ENCODE measurements at regions of chr19 and their contacts with region 1.

Region 1: DNA sequence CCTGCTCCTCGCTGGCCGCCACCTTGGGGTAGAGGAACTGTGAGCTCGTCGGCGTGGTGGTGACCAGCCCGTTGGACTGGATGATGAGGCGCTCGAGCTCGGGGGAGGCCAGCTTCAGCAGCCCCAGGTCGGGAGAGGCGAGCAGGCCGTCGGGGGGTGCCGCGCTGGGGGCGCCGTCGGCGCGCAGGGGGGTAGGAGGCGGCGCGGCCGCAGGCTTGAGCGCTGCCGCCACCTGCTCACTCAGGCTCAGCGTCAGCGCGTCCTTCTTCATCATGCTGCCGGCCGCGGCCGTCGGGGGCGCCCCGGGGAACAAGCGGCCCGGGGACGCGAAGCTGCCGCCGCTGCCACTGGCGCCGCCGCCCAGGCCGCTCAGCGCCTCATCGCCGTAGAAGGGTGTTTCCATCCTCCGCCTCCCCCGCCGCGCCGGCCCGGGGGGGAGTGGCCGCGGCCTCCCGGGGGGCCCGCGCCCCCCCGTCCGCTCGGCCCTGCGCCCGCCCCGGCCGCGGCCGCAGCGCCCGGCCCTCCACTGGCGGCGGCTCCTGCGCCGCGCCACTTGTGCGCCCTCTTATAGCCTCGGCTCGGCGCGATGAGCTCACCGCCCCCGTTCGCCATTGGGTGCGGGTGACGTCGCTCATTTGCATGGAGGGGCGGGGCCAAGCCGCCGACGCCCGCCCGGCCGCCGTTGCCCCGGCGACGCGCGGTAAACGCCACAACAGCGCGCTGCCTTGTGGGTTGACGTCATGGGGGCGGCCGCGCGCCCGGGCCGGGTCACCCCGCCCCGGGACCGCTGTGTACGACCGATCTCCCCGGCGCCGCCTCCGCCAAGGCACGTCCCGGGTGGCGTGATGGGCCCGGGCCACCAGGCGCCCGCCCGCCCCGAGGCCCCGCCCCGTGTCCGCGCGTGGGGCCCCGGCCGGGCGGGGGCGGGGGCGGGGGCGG is at the start of gene JUND:
- DNase-seq: peak; percentile 98 to 99 (median 99)
- ATAC-seq: peak; percentile 77
- H3K4me3 ChIP-seq: peak within 1 kb of the TSS; percentile 91
- H3K4me3 Mint-ChIP-seq: peak within 1 kb of the TSS; percentile 91 to 98 (median 94)
- H3K27ac ChIP-seq: peak within 1 kb of the TSS; percentile 100
- H3K27ac Mint-ChIP-seq: peak within 1 kb of the TSS; percentile 96 to 99 (median 98)
- H3K4me1 ChIP-seq: peaks cover 26 to 45% of the 10 kb centered on the region in 2 donors
- H3K4me1 Mint-ChIP-seq: peaks cover 29 to 56% (median 50%) of the 10 kb centered on the region in 7 donors
- H3K27me3 ChIP-seq: no peaks in the 10 kb centered on the region
- H3K27me3 Mint-ChIP-seq: peaks cover 0 to 9% (median 0%) of the 10 kb centered on the region in 5 donors
- total RNA-seq, gene JUND: 196 to 1,360 (median 279) TPM

Region 2: DNA sequence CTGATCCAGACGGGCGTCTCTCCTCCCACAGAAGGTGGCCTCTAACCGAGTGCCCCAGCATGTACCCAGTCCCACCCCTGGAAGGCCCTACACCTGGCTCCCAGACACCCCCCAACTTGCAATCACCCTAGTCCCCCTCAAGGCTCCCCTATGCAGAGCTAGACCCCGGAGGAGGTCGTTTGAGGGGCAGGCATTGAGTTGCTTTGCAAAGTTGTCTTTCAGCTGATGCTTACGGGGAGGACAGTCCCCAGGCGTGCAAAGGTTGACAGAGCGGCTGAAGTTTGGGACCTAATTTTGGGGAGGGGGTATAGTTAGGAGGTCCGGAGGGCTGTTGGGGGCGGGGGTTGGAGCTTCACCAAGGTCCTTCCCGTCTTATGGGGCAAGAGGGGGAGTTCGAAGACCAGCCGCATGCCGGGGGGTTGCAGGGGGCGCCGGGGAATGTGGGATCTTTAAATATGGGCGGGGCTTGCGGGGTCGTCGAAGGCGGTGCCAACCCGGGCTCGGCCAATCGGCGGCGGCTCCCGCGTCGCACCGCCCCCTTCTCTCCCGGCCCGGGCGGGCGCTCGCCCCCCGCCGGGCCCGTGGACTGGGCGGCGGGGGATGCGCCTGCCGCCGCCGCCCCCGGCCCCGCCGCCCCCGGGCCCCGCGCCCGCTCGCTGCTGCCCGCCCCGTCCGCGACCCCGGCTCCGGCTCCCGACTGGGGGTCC is 314.6 kb before region 1 on chr19 and contains the start of gene KCNN1:
- CTCF ChIA-PET with region 1: no interaction called
- POLR2A ChIA-PET with region 1: no interaction called
- intact Hi-C with region 1: no loop called
- DNase-seq: no peak
- ATAC-seq: no peak
- H3K4me3 ChIP-seq: no peak within 1 kb of the TSS
- H3K4me3 Mint-ChIP-seq: peak within 1 kb of the TSS in 9 of 10 donors; percentile 34 to 81 (median 67)
- H3K27ac ChIP-seq: no peak within 1 kb of the TSS
- H3K27ac Mint-ChIP-seq: peak within 1 kb of the TSS in 1 of 9 donors; percentile 43
- H3K4me1 ChIP-seq: peaks cover 0 to 5% of the 10 kb centered on the region in 2 donors
- H3K4me1 Mint-ChIP-seq: peaks cover 0 to 11% (median 8%) of the 10 kb centered on the region in 7 donors
- H3K27me3 ChIP-seq: peaks cover 0 to 13% of the 10 kb centered on the region in 2 donors
- H3K27me3 Mint-ChIP-seq: peaks cover 32 to 48% (median 38%) of the 10 kb centered on the region in 5 donors
- total RNA-seq, gene KCNN1: 0.05 TPM in 1 of 5 experiments, not detected in the others

Region 3: DNA sequence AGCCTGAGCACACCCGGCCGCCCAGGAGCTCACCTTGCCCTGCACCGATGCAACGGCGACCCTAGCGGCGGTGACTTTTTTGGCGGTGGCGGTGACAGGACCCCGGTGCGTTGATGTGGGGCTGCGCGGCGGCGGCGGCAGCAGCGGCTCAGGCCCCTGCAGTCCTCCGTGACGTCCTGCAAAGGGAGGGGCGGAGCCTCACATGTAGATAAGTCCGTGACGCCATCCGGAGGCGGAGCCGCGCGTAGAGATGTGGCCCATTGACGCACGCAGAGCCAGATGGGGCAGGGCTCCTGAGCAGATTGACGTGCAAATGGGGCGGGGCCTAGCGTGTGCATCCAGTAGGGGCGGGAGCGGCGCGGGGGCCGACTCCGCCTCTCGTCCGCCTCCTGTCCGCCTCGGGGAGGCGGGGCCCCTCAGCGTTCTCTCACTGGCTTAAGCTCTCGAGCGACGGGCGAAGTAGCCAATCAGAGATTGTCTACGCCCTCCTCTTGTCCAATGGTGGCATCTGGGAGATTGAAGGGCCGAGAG is 77.4 kb before region 1 on chr19 and contains the start of gene RAB3A:
- CTCF ChIA-PET with region 1: interaction called, 3 read pairs
- POLR2A ChIA-PET with region 1: interaction called, 37 read pairs
- intact Hi-C with region 1: loop called in 1 of 2 experiments (anchors 1 kb)
- DNase-seq: peak; percentile 95 to 100 (median 99)
- ATAC-seq: peak; percentile 95
- H3K4me3 ChIP-seq: peak within 1 kb of the TSS; percentile 90
- H3K4me3 Mint-ChIP-seq: peak within 1 kb of the TSS; percentile 83 to 98 (median 96)
- H3K27ac ChIP-seq: peak within 1 kb of the TSS; percentile 85
- H3K27ac Mint-ChIP-seq: peak within 1 kb of the TSS; percentile 87 to 99 (median 97)
- H3K4me1 ChIP-seq: peaks cover 15 to 16% of the 10 kb centered on the region in 2 donors
- H3K4me1 Mint-ChIP-seq: peaks cover 11 to 26% (median 22%) of the 10 kb centered on the region in 7 donors
- H3K27me3 ChIP-seq: no peaks in the 10 kb centered on the region
- H3K27me3 Mint-ChIP-seq: peaks cover 0 to 8% (median 0%) of the 10 kb centered on the region in 5 donors
- total RNA-seq, gene RAB3A: 5.7 to 16.7 (median 8.8) TPM

Region 4: DNA sequence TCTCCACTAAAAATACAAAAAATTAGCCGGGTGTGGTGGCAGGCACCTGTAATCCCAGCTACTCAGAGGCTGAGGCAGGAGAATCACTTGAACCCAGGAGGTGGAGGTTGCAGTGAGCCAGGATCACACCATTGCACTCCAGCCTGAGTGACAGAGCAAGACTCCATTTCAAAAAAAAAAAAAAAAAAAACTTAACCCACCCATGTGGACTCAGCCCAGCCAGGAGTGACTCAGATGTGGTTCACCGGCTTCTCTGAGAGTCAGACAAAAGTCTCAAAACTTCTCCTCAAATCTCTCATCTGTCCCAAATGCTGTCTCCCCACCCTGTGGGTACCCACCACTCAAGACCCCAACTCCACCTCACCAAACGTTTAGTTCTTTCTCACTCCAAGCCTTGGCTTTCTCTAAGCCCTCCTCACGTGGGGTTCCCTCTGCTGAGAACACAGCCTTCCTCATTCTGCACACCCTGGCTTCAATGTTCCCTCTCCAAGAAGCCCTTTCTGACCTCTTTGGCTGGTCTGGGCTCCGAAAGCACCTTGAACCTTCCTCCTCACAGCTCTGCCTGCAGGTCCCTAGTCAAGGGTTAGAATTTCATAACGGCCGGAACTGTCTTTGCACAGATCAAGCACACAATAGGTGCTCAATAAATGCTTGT is 66.4 kb before region 1 on chr19:
- CTCF ChIA-PET with region 1: no interaction called
- POLR2A ChIA-PET with region 1: no interaction called
- intact Hi-C with region 1: no loop called
- DNase-seq: no peak
- ATAC-seq: no peak
- H3K4me3 ChIP-seq: no peak overlapping the region
- H3K4me3 Mint-ChIP-seq: no peak overlapping the region
- H3K27ac ChIP-seq: no peak overlapping the region
- H3K27ac Mint-ChIP-seq: no peak overlapping the region
- H3K4me1 ChIP-seq: no peaks in the 10 kb centered on the region
- H3K4me1 Mint-ChIP-seq: no peaks in the 10 kb centered on the region
- H3K27me3 ChIP-seq: no peaks in the 10 kb centered on the region
- H3K27me3 Mint-ChIP-seq: peaks cover 0 to 12% (median 8%) of the 10 kb centered on the region in 5 donors

Region 5: DNA sequence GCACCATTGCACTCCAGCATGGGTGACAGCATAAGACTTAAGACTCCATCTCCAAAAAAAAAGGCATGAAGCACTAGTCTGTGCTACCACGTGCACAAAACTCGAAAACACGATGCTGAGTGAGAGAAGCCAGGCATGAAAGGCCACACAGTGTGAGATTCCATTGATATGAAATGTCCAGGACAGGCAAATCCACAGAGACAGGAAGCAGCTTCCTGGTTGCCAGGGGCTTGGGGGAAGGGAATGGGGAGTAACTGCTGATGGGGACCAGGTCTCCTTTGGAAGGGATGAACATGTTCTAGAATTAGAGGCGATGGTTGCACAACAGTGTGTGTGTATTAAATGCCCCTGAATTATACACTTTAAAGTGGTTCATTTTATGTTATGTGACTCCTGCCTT is 16.0 kb after region 1 on chr19:
- CTCF ChIA-PET with region 1: interaction called, 73 read pairs
- POLR2A ChIA-PET with region 1: interaction called, 351 read pairs
- intact Hi-C with region 1: loop called in 1 of 2 experiments (anchors 2 kb)
- DNase-seq: no peak
- ATAC-seq: no peak
- H3K4me3 ChIP-seq: no peak overlapping the region
- H3K4me3 Mint-ChIP-seq: no peak overlapping the region
- H3K27ac ChIP-seq: no peak overlapping the region
- H3K27ac Mint-ChIP-seq: peak overlapping the region in 8 of 9 donors; percentile 4 to 74 (median 46)
- H3K4me1 ChIP-seq: peaks cover 20 to 26% of the 10 kb centered on the region in 2 donors
- H3K4me1 Mint-ChIP-seq: peaks cover 19 to 47% (median 27%) of the 10 kb centered on the region in 7 donors
- H3K27me3 ChIP-seq: no peaks in the 10 kb centered on the region
- H3K27me3 Mint-ChIP-seq: no peaks in the 10 kb centered on the region

Region 6: DNA sequence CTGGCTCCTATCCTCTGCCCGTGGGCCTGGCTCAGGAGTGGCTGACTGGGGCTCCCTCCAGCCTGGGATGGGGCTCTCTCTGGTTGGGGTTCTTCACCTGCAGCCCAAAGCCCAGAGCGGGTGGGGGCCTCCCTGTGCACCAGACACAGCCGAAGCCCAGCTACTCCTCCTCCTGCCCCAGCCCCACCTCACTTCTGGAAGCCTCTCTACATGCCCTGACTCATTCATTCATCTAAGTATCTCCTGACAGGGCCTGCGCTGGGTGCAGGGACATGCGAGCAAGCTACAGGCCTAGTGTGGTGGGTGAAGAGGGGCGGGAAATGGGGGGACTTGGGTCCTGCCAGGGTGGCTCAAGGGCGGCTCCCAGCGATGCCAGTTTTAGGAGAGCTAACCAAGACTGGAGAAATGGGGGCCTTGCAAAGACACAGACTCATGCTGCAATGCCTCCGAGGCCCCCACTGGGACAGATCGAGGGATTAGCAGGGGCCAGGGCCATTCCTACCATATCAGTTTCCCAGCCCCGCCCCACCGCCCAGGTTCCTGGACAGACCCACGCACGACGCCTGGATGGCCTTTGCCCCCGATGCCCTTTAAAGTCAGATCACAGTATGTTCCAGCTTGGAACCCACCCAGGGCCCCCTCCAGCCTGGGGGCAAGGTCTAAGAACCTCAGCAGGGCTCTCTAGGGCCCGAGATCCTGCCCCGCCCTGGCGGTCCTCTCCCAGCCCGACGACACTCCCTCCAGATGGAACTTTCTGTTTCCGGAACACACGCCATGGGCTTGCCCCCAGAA is 29.0 kb after region 1 on chr19:
- CTCF ChIA-PET with region 1: interaction called, 73 read pairs
- POLR2A ChIA-PET with region 1: interaction called, 757 read pairs
- intact Hi-C with region 1: no loop called
- DNase-seq: no peak
- ATAC-seq: no peak
- H3K4me3 ChIP-seq: no peak overlapping the region
- H3K4me3 Mint-ChIP-seq: no peak overlapping the region
- H3K27ac ChIP-seq: no peak overlapping the region
- H3K27ac Mint-ChIP-seq: peak overlapping the region in 3 of 9 donors; percentile 28 to 71 (median 46)
- H3K4me1 ChIP-seq: peaks cover 13 to 30% of the 10 kb centered on the region in 2 donors
- H3K4me1 Mint-ChIP-seq: peaks cover 12 to 42% (median 25%) of the 10 kb centered on the region in 7 donors
- H3K27me3 ChIP-seq: no peaks in the 10 kb centered on the region
- H3K27me3 Mint-ChIP-seq: no peaks in the 10 kb centered on the region

Region 7: DNA sequence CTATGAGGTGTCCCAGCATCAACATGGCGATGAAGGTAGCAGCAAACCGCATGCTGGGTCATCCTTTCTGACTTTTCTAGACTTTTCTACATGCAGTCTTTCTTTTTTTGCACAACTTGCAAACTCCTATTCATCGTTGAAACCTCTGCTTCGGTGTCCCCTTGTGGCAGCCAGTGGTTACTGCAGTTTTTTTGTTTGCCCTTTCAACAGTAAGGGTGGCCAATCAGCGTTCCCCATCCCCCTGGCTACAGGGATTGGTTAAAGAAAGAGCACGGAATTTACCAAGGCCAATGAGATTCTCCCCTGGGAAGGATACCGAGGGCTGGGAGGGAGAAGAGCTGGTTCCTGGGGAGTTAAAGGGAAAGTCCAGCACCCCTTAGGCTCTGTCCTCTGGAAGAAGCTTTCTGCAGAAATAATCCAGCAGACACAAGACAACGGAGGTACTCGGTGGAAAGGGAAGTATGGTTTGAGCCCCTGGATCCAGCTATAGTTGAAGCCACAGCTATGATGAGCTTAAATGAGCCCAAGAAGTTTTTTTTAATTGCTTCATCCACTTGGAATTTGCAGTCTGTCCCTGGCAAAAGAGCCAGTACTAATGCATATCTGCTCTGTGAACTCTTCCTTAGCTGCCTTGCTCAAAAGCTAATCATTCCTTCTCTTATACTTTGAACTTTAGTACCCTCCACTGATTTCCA is 47.1 kb after region 1 on chr19:
- CTCF ChIA-PET with region 1: interaction called, 266 read pairs
- POLR2A ChIA-PET with region 1: interaction called, 757 read pairs
- intact Hi-C with region 1: loop called (anchors 1 kb)
- DNase-seq: peak; percentile 55 to 92 (median 90)
- ATAC-seq: peak; percentile 99
- H3K4me3 ChIP-seq: peak overlapping the region; percentile 52
- H3K4me3 Mint-ChIP-seq: peak overlapping the region; percentile 62 to 87 (median 78)
- H3K27ac ChIP-seq: peak overlapping the region; percentile 45
- H3K27ac Mint-ChIP-seq: peak overlapping the region in 8 of 9 donors; percentile 38 to 75 (median 72)
- H3K4me1 ChIP-seq: peaks cover 12% of the 10 kb centered on the region in 2 donors
- H3K4me1 Mint-ChIP-seq: peaks cover 13 to 23% (median 20%) of the 10 kb centered on the region in 7 donors
- H3K27me3 ChIP-seq: no peaks in the 10 kb centered on the region
- H3K27me3 Mint-ChIP-seq: no peaks in the 10 kb centered on the region

Region 8: GRCh38 chr19:18388100-18388959 is 107.0 kb after region 1 on chr19:
- CTCF ChIA-PET with region 1: interaction called, 17 read pairs
- POLR2A ChIA-PET with region 1: interaction called, 8 read pairs
- intact Hi-C with region 1: no loop called
- DNase-seq: peak; percentile 38 to 86 (median 65)
- ATAC-seq: peak; percentile 90
- H3K4me3 ChIP-seq: peak overlapping the region; percentile 38
- H3K4me3 Mint-ChIP-seq: peak overlapping the region; percentile 62 to 83 (median 78)
- H3K27ac ChIP-seq: no peak overlapping the region
- H3K27ac Mint-ChIP-seq: peak overlapping the region in 1 of 9 donors; percentile 42
- H3K4me1 ChIP-seq: peaks cover 0 to 4% of the 10 kb centered on the region in 2 donors
- H3K4me1 Mint-ChIP-seq: peaks cover 0 to 12% (median 7%) of the 10 kb centered on the region in 7 donors
- H3K27me3 ChIP-seq: peaks cover 0 to 11% of the 10 kb centered on the region in 2 donors
- H3K27me3 Mint-ChIP-seq: peaks cover 19 to 73% (median 29%) of the 10 kb centered on the region in 5 donors

Region 9: GRCh38 chr19:18568367-18568766 is 287.0 kb after region 1 on chr19:
- CTCF ChIA-PET with region 1: no interaction called
- POLR2A ChIA-PET with region 1: no interaction called
- intact Hi-C with region 1: no loop called
- DNase-seq: no peak
- ATAC-seq: no peak
- H3K4me3 ChIP-seq: no peak overlapping the region
- H3K4me3 Mint-ChIP-seq: no peak overlapping the region
- H3K27ac ChIP-seq: no peak overlapping the region
- H3K27ac Mint-ChIP-seq: no peak overlapping the region
- H3K4me1 ChIP-seq: peaks cover 13 to 15% of the 10 kb centered on the region in 2 donors
- H3K4me1 Mint-ChIP-seq: peaks cover 14 to 28% (median 19%) of the 10 kb centered on the region in 7 donors
- H3K27me3 ChIP-seq: no peaks in the 10 kb centered on the region
- H3K27me3 Mint-ChIP-seq: peaks cover 0 to 2% (median 0%) of the 10 kb centered on the region in 5 donors

Measured in naive thymus-derived CD4-positive, alpha-beta T cell (primary cell).